PC-9 (cell line): ENCODE measurements at regions of chr4 and their contacts with region 1.

Region 1: DNA sequence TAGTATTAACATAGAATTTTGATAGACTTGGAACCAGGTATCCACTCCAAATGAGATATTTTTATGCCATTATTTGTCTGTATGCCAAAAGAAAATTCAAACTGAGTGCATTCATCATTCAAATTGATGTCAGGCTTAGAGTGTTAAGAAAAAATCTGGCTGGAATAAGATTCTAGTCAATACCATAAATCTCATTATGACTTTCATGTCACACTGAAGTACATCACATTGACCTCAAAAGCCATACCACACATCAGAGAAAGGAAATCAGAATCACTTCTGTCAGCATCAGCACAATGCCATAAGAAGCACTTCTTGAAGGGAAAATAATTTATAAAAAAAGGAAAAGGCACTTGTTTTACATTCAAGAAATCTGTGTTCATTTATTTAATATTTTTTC is 119.0 kb upstream of the BMP3 start:
- DNase-seq: no peak
- H3K4me3 ChIP-seq: no peak overlapping the region
- H3K27ac ChIP-seq: no peak overlapping the region
- H3K4me1 ChIP-seq: no peaks in the 10 kb centered on the region
- H3K27me3 ChIP-seq: no peaks in the 10 kb centered on the region
- CTCF ChIP-seq: no peak

Region 2: DNA sequence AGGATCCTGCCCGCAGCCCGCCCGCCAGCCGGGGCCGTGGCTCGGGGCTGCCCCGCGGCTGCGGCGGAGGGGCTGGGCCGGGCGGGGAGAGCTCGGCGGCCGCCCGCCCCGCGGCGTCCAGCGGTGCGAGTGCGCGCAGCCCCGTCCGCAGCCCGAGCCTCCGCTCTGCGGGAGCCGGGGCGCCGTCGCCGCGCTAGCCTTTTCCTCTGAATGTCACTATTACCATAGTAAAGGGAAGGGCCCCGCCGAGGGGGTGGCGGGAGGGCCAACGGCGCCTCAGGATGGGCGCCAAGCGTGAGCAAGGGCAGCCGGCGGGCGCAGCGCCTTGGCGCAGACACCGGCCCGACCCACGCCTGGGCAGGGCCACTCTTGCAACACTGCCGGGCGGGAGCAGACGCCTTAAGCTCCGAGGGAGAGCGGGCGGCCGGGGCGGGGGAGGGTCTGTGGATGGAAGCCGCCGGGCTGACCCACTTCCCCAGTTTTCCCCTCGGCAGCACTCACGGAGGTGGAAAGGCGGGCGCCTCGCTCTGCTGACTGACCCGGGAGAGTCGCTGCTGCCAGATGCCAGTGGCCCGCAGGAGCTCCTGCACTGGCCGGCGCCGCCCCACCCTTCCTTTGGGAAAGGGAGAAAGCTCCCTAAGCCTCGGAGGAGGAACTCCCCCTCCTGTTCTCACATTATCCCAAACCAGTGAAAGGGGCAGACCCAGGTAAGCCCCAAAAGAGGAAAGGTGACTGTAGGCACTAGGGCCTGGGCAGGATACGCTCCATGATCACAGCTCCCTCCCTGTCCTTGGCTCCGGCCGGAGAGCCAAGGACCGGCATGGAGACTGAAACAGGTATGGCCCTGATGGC is 1132.9 kb after region 1 on chr4:
- CTCF ChIA-PET with region 1: interaction called, 15 read pairs
- POLR2A ChIA-PET with region 1: no interaction called
- intact Hi-C with region 1: no loop called
- DNase-seq: peak in 1 of 2 experiments; percentile 34
- H3K4me3 ChIP-seq: peak overlapping the region; percentile 42; the same call in 1 of the 2 replicates
- H3K27ac ChIP-seq: no peak overlapping the region
- H3K4me1 ChIP-seq: no peaks in the 10 kb centered on the region
- H3K27me3 ChIP-seq: peaks cover 11% of the 10 kb centered on the region; the same call in 1 of the 2 replicates
- CTCF ChIP-seq: no peak